AG04449 (cell line): ENCODE measurements at regions of chr16 and their contacts with region 1.

Region 1: DNA sequence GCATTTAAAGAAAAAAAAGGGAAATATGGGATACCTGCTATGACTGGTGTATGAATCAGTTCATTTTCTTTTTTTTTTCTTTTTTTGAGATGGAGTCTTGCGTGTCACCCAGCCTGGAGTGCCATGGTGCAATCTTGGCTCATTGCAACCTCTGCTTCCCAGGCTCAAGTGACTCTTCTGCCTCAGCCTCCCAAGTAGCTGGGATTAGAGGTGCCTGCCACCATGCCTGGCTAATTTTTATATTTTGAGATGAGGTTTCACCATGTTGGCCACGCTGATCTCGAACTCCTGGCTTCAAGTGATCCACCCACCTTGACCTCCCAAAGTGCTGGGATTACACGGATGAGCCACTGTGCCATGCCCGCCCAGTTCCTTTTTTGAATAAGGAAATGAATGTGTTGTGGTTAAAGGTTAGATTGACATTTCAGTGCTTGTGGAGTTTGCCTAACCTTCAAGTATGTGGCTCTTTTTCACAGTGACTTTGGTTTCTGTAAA is 7.7 kb downstream of the HAPSTR1 start:
- DNase-seq: no peak
- H3K4me3 ChIP-seq: no peak overlapping the region
- CTCF ChIP-seq: no peak

Region 2: DNA sequence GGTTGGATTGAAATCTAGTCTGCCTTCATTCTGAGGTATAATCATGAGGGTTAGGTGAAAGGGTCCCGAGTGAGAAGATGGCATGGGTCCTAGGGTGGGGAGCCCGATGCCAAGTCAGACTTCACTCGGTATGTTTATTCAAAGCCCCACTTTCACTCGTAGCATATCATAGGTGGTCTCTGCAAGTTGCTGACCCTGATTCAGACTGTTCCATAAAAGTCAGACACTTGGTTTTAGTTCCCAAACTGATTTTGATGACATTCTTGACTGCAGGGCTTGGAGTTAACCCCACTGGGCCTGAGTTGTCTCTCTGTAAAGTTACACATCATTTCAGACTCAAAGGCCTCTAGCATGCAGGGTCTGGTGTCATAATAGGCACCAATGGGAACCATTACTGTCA is 10.1 kb after region 1 on chr16:
- CTCF ChIA-PET with region 1: interaction called, 10 read pairs
- POLR2A ChIA-PET with region 1: interaction called, 3 read pairs
- DNase-seq: no peak
- H3K4me3 ChIP-seq: no peak overlapping the region
- CTCF ChIP-seq: no peak